ENCODE measurements at regions of chr20 and their contacts with region 1.

Region 1: DNA sequence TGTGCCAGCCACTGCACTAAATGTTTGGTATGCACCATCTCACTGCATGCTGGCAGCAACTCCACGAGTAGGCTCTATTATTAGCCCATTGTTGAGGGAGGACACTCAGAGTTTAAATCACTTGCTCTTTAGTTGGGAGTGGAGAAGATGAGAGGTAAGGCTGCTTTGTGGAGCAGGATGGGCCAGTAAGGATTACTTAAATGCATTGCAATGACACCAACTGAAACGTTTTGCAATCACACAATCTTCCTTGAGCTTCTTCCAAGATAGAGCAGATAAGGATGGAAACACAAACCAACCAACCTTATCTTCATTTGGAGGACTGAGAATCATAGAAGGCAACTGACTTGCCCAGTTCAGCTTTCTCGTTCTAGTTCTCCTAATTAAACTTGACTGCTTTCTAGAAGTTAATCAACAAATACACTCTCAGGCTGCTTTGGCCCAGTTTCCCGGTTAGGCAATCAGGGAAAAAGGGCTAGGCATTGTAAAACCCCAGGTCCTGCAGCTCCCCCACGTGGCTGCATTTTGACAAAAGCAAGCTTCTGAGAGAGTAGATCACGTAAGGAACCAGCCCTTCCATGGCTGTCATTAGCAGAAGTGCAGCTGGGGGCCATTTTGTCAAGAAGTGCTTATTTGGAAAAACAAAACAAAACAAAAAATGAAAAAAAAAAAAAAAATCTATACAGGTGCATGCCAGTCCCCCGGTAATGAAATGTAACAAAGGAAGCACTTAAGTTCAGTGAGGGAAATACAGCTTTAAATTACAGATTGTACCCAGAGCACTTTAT is 130.6 kb downstream of the BCAS1 start:
- DNase-seq: peak; percentile 79 to 94
- ATAC-seq: peak; percentile 91 to 94
- H3K4me3 ChIP-seq: no peak overlapping the region
- H3K27ac ChIP-seq: peak overlapping the region; percentile 62 to 78
- H3K4me1 ChIP-seq: peaks cover 60% of the 10 kb centered on the region
- CTCF ChIP-seq: peak; percentile 92
- EP300 ChIP-seq: no peak; a peak in 1 of 5 replicates
- POLR2A ChIP-seq: no peak
- RAD21 ChIP-seq: peak; percentile 98 to 99

Region 2: DNA sequence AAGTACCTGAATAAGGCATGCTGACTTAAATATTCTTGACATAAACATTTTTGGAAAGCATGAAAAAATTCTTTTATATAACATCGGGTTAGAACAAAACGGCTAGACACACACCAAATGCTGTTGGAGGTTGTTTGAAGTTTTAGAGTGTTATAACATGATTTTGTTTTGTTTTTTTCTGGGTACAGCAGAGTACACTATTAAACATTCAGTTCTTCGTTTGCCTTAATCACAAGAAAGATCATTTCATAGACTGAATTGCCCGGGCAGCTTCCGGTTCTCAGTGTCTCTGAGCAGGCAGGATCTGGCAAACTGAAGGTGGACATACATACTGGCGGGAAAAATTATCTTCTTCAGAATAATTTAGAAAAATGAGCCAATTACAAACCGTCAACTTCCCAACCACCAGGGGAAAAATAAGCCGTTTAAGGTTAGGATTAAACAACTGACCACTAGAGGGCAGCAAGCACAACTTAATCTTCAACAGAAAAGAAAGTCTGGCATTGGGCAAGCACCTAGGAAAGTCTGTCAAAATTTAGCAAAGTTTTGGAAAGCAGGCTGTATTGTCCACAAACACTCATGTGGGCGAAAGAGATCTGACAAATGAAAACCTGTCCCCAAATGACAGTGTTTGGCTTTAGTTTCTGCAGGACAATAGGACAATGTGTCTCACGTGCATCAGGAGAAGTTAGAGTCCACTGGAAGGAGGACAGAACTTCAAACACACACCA is 361.1 kb before region 1 on chr20:
- CTCF ChIA-PET with region 1: interaction called, 120 read pairs
- POLR2A ChIA-PET with region 1: interaction called, 8 read pairs
- DNase-seq: peak; percentile 90
- ATAC-seq: peak; percentile 57 to 73; a peak in 5 of 6 replicates
- H3K4me3 ChIP-seq: peak overlapping the region; percentile 21; the same call in 2 of the 3 replicates
- H3K27ac ChIP-seq: peak overlapping the region; percentile 75 to 87
- H3K4me1 ChIP-seq: peaks cover 62% of the 10 kb centered on the region
- CTCF ChIP-seq: peak; percentile 91
- EP300 ChIP-seq: no peak
- POLR2A ChIP-seq: no peak
- RAD21 ChIP-seq: peak; percentile 83 to 91

Region 3: DNA sequence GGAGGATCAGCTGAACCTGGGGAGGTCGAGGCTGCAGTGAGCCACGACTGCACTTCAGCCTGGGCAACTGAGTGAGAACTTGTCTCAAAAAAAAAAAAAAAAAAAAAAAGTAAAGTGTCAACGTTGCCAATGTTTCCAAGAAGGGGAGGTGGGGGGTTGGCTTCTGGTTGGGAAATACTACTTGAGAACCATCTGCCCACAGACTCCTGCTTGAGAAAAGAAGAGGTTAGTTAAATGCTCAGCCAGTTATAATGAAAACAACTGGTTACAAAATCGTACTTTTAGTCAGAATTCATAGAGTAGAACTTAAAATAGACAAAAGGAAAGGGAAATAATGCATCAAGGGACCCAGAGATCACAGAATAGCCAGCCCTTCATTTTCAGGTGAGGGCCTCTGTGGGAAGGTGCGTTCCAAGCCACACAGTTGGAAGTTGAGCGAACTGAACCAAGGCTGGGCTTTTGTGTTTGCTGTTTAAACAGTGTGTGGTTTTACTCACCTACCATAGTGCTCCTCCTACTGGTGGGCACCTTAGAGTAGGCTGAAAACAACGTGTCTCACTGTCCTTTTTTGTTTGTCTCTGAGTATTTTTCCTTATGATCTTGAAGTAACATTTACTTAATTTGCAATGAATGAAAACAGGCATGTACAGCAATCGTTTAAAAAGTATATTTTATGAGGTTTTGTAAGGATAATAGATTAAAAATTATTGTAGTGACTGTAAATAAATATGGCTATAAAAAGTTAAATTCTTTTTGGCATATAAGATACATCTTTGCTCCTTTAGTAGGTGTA is 70.1 kb before region 1 on chr20:
- CTCF ChIA-PET with region 1: interaction called, 10 read pairs
- POLR2A ChIA-PET with region 1: interaction called, 6 read pairs
- DNase-seq: peak; percentile 83 to 93
- ATAC-seq: peak; percentile 88 to 89
- H3K4me3 ChIP-seq: no peak overlapping the region
- H3K27ac ChIP-seq: peak overlapping the region; percentile 82 to 93
- H3K4me1 ChIP-seq: peaks cover 72% of the 10 kb centered on the region
- CTCF ChIP-seq: peak; percentile 87
- EP300 ChIP-seq: no peak; a peak in 1 of 5 replicates
- POLR2A ChIP-seq: no peak
- RAD21 ChIP-seq: peak; percentile 91

Region 4: GRCh38 chr20:53926428-53927028 is 13.2 kb before region 1 on chr20:
- CTCF ChIA-PET with region 1: interaction called, 71 read pairs
- POLR2A ChIA-PET with region 1: interaction called, 4 read pairs
- DNase-seq: peak; percentile 68 to 90
- ATAC-seq: peak; percentile 94 to 99
- H3K4me3 ChIP-seq: no peak overlapping the region
- H3K27ac ChIP-seq: peak overlapping the region; percentile 61 to 77
- H3K4me1 ChIP-seq: peaks cover 32% of the 10 kb centered on the region
- CTCF ChIP-seq: no peak
- EP300 ChIP-seq: no peak
- POLR2A ChIP-seq: no peak
- RAD21 ChIP-seq: no peak